Activated CD4-positive, alpha-beta T cell treated with anti-CD3 and anti-CD28 coated beads for 36 hours (primary cell): ENCODE measurements at regions of chr17 and their contacts with region 1.

Region 1: GRCh38 chr17:37609170-37610040 is at the start of gene SYNRG:
- DNase-seq: peak; percentile 96
- ATAC-seq: peak; percentile 82
- H3K4me3 Mint-ChIP-seq: peak within 1 kb of the TSS; percentile 85
- H3K27ac Mint-ChIP-seq: peak within 1 kb of the TSS; percentile 98
- H3K4me1 Mint-ChIP-seq: peaks cover 37% of the 10 kb centered on the region
- H3K27me3 Mint-ChIP-seq: no peaks in the 10 kb centered on the region
- total RNA-seq, gene SYNRG: 39.0 to 46.7 TPM

Region 2: DNA sequence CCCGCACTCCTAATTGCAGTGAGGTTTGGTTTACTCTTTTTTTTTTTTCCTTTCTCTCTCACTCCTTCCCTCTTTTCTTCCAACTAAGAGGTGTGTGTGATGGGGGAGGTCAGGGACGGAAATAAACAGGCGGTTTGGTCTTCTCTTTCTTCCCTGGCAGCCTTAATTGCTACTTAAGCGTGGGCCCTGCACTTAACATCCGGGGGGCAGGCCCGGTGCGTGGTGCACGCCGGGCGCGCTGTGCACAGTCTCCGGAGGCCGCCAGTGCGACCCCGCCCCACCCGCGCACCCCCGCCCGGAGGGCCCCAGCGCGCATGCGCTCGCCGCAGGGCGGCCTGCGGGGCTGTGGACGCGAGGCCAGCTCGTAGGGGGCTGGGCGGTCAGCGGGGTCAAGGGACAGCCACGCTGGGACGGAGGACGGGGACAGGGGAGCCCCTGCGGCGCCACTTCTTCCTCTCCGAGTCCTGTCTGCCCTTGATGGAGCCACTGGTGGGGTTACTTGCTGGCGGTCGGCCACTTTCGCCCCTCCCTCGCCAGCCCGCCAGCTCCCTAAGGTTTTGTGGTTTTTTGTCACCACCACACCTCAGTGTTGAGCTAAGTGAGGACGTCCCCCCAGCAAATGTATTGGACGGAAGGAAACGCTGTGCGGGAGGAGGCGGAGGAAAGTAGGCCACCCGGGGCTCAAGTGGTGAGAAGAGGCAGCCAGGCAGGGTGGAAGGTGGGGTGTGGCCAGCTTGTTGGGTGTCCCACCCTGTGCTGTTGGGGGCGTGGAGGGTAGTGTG is 887.1 kb before region 1 on chr17:
- CTCF ChIA-PET with region 1: no interaction called
- POLR2A ChIA-PET with region 1: no interaction called
- intact Hi-C with region 1: loop called in 1 of 2 experiments (anchors 2 kb)
- DNase-seq: peak; percentile 91
- ATAC-seq: peak; percentile 94
- H3K4me3 Mint-ChIP-seq: peak overlapping the region; percentile 76
- H3K27ac Mint-ChIP-seq: peak overlapping the region; percentile 98
- H3K4me1 Mint-ChIP-seq: peaks cover 46% of the 10 kb centered on the region
- H3K27me3 Mint-ChIP-seq: no peaks in the 10 kb centered on the region

Region 3: DNA sequence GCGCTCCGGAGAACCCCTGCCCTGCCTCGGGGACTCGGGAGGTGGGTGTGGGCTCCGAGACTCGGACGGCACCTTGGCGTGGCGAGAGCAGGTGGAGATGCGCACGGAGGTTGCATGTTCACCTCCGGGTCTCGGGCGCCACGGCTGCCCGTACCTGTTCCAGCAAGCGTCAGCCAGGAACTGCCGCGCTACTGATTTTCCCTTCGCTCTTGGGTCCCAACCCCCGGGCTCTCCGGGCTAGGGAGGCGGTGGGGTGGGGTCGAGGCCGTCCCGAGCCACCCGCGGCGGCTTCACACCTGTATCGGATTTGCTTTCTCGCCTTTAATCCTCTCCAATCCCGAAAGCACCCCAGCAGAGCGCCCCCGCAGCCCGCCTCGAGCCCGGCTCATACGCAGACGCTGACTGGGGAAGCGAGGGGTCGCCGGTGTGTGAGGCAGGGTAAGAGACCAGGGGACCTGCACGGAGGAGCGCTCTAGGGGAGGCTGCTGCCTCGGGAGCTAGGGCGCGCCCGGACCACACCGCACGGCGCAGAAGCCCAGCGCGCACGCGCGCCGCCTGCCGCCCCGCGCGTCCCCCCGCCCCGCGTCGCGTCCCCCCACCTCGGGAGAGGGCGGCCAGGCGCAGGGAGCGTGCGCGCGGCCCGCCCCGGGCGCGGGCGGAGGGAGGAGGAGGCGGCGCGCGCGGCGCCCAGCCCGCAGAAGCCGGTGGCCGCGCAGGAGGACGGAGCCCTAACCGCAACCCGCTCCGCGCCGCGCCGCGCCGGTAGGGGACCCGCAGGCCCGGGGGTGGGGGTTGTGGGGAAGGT is 120.0 kb before region 1 on chr17 and contains the start of gene DUSP14:
- CTCF ChIA-PET with region 1: interaction called, 3 read pairs
- POLR2A ChIA-PET with region 1: no interaction called
- intact Hi-C with region 1: loop called (anchors 1 to 2 kb)
- DNase-seq: peak; percentile 88
- ATAC-seq: peak; percentile 74
- H3K4me3 Mint-ChIP-seq: peak within 1 kb of the TSS; percentile 88
- H3K27ac Mint-ChIP-seq: peak within 1 kb of the TSS; percentile 93
- H3K4me1 Mint-ChIP-seq: peaks cover 44% of the 10 kb centered on the region
- H3K27me3 Mint-ChIP-seq: no peaks in the 10 kb centered on the region
- total RNA-seq, gene DUSP14: 11.9 to 13.1 TPM

Region 4: DNA sequence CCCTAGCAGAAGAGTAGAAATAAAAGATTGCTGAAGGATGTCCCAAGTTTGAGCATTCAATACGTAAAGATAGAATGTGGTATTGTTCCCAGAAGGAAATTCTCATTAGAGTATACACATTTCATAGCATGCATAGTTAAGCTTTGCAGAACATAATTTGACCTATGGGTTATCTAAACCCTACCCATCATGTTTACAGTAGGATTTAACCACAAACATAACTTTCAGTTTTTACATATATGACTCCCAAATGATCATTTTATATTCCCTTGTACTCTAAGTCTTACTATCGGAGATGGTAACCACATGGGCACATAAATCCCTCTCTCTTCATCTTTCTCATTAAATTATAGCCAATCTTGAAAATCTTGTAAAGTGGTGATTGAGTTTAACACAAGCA is 51.1 kb before region 1 on chr17:
- CTCF ChIA-PET with region 1: no interaction called
- POLR2A ChIA-PET with region 1: no interaction called
- intact Hi-C with region 1: loop called in 1 of 2 experiments (anchors 5 kb)
- DNase-seq: no peak
- ATAC-seq: no peak
- H3K4me3 Mint-ChIP-seq: no peak overlapping the region
- H3K27ac Mint-ChIP-seq: no peak overlapping the region
- H3K4me1 Mint-ChIP-seq: peaks cover 15% of the 10 kb centered on the region
- H3K27me3 Mint-ChIP-seq: no peaks in the 10 kb centered on the region

Region 5: GRCh38 chr17:37770631-37771518 is 161.5 kb after region 1 on chr17:
- CTCF ChIA-PET with region 1: no interaction called
- POLR2A ChIA-PET with region 1: no interaction called
- intact Hi-C with region 1: loop called in 1 of 2 experiments (anchors 5 kb)
- DNase-seq: peak; percentile 72
- ATAC-seq: no peak
- H3K4me3 Mint-ChIP-seq: no peak overlapping the region
- H3K27ac Mint-ChIP-seq: no peak overlapping the region
- H3K4me1 Mint-ChIP-seq: peaks cover 24% of the 10 kb centered on the region
- H3K27me3 Mint-ChIP-seq: peaks cover 24% of the 10 kb centered on the region

Region 6: DNA sequence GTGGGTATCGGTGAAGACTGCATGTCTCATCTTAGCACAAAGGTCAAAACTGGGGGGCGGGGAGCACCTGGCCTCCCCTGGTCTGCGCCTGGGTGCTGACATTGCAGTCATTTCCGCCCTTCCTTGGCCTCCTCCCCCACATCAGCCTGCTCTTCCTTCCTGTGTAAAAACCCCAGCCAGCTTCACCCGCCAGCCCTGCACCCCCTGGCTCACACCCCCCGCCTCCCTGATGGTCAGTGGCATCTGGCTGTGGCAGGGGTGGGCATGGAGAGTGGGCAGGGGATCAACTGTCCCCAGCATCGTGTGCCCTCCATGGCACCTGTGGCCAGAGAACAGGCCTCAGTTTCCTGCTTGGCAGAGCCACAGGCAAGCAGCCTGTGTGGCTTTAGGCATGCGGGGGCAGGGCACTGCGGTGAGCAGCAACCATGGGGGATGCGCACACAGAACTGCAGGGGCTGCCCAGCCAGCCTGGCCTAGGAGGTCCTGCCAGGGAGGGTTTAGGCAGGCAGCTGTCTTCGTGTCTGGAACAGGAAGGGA is 1289.5 kb after region 1 on chr17:
- CTCF ChIA-PET with region 1: no interaction called
- POLR2A ChIA-PET with region 1: no interaction called
- intact Hi-C with region 1: loop called in 1 of 2 experiments (anchors 5 kb)
- DNase-seq: peak; percentile 95
- ATAC-seq: peak; percentile 91
- H3K4me3 Mint-ChIP-seq: peak overlapping the region; percentile 70
- H3K27ac Mint-ChIP-seq: peak overlapping the region; percentile 98
- H3K4me1 Mint-ChIP-seq: peaks cover 65% of the 10 kb centered on the region
- H3K27me3 Mint-ChIP-seq: no peaks in the 10 kb centered on the region